B cell (primary cell): ENCODE measurements at regions of chr3 and their contacts with region 1.

Region 1: GRCh38 chr3:64023187-64023848 is at the start of gene PSMD6:
- DNase-seq: peak; percentile 94
- ATAC-seq: peak; percentile 98
- H3K4me3 ChIP-seq: peak within 1 kb of the TSS; percentile 85 to 92 (median 87)
- H3K4me3 Mint-ChIP-seq: peak within 1 kb of the TSS; percentile 91
- H3K27ac ChIP-seq: peak within 1 kb of the TSS; percentile 73 to 90
- H3K27ac Mint-ChIP-seq: peak within 1 kb of the TSS; percentile 86
- H3K4me1 ChIP-seq: peaks cover 15 to 18% of the 10 kb centered on the region in 2 donors
- H3K4me1 Mint-ChIP-seq: peaks cover 26% of the 10 kb centered on the region
- H3K27me3 ChIP-seq: peaks cover 0 to 6% (median 4%) of the 10 kb centered on the region in 4 experiments
- H3K27me3 Mint-ChIP-seq: peaks cover 4% of the 10 kb centered on the region
- CTCF ChIP-seq: peak; percentile 100
- total RNA-seq, gene PSMD6: 63.4 and 64.7 TPM in 2 replicates

Region 2: DNA sequence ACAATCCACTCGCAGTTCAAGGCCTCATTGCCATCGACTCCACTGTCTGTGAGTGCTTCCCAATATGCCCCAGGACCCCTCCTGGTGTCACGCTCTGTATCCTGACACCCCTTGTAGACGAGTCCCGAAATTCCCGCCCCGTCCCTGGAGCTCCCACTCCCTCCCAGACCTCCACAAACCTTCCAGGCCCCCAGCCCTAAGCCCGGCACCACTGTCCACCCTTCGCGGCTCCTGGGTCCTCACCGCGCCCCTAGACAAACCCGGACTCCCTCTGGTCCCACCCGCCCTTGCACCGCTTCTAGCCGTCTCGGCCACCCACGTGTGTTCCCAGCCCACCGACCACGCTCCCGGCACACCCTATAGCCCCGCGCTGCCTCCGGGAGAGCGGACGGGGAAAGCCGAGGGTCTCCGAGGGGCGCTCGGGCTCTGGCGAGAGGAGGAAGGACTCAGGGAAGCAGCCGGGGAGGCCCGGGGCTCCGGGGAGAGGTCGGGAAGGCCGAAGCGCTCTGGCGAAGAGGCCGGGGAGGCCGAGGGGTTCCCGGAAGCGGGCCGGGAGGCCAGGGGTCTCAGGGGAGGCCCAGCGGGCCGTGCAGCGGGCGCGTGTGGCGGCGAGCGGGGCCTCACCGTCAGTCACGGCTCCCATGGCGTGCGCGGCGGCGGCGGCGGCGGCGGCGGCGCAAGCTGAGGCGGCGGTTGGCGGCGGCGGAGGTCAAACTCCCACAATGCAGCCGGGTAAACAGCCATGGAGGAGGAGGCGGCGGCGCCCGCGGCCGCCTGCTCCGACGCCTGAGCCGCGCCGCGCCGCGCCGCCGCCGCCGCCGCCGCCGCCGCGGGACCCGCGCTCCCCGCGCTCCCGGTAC is 159.9 kb before region 1 on chr3 and contains the starts of genes ATXN7 and THOC7:
- CTCF ChIA-PET with region 1: no interaction called
- POLR2A ChIA-PET with region 1: no interaction called
- intact Hi-C with region 1: loop called (anchors 2 kb)
- DNase-seq: peak; percentile 87
- ATAC-seq: peak; percentile 77
- H3K4me3 ChIP-seq: peak within 1 kb of the TSS; percentile 58 to 96 (median 84)
- H3K4me3 Mint-ChIP-seq: peak within 1 kb of the TSS; percentile 97
- H3K27ac ChIP-seq: peak within 1 kb of the TSS; percentile 64 to 88
- H3K27ac Mint-ChIP-seq: peak within 1 kb of the TSS; percentile 97
- H3K4me1 ChIP-seq: peaks cover 16 to 19% of the 10 kb centered on the region in 2 donors
- H3K4me1 Mint-ChIP-seq: peaks cover 55% of the 10 kb centered on the region
- H3K27me3 ChIP-seq: no peaks in the 10 kb centered on the region
- H3K27me3 Mint-ChIP-seq: no peaks in the 10 kb centered on the region
- CTCF ChIP-seq: no peak
- total RNA-seq, gene ATXN7: 74.3 and 74.7 TPM in 2 replicates
- total RNA-seq, gene THOC7: 30.5 and 31.5 TPM in 2 replicates

Region 3: DNA sequence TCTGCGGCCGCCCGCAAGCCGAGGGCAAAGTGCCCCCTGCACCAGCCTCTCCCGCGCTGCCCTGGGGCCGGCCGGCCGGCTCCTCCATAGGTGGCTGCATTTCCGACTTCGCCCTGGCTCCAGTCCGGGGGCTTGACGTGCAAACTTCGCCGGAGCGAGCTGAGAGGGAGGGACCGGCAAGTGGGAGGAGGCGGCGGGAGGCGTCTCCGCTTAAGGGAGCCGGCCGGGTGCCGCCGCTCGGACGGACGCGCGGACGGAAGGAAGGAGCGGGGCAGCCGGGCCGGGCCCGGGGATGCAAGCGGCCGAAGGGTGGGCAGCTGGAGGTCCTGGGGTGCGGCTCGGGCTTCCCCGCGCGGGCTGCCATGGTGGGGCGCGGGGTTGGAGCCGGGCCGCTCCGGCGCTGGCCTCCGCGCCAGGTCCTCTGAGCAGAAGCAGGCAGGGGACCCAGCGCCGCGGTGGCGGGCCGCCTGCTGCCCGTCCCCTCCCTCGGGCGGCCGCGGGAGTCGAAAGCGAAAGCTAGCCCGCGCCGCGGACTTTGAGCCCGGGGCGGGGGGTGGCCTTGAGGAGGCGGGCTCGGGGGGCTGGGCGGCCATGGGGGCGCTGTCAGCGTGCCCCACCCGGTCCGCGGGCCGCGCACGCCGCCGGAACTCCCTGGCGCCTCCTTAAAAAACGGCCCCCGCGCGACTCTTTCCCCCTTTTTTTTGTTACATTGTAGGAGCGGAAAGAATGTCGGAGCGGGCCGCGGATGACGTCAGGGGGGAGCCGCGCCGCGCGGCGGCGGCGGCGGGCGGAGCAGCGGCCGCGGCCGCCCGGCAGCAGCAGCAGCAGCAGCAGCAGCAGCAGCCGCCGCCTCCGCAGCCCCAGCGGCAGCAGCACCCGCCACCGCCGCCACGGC is 111.2 kb before region 1 on chr3 and contains the start of gene SCAANT1:
- CTCF ChIA-PET with region 1: interaction called, 6 read pairs
- POLR2A ChIA-PET with region 1: no interaction called
- intact Hi-C with region 1: loop called (anchors 1 kb)
- DNase-seq: peak; percentile 89
- ATAC-seq: peak; percentile 70
- H3K4me3 ChIP-seq: peak within 1 kb of the TSS; percentile 54 to 73 (median 63)
- H3K4me3 Mint-ChIP-seq: peak within 1 kb of the TSS; percentile 95
- H3K27ac ChIP-seq: peak within 1 kb of the TSS; percentile 70 to 87
- H3K27ac Mint-ChIP-seq: peak within 1 kb of the TSS; percentile 97
- H3K4me1 ChIP-seq: peaks cover 17 to 25% of the 10 kb centered on the region in 2 donors
- H3K4me1 Mint-ChIP-seq: peaks cover 28% of the 10 kb centered on the region
- H3K27me3 ChIP-seq: no peaks in the 10 kb centered on the region
- H3K27me3 Mint-ChIP-seq: no peaks in the 10 kb centered on the region
- CTCF ChIP-seq: no peak
- total RNA-seq, gene SCAANT1: 1.7 TPM in 1 of 2 replicates, not detected in the other

Region 4: GRCh38 chr3:63927422-63928280 is 95.7 kb before region 1 on chr3:
- CTCF ChIA-PET with region 1: no interaction called
- POLR2A ChIA-PET with region 1: no interaction called
- intact Hi-C with region 1: loop called (anchors 5 kb)
- DNase-seq: peak; percentile 68
- ATAC-seq: peak; percentile 91
- H3K4me3 ChIP-seq: peak overlapping the region in 1 of 5 experiments; percentile 11
- H3K4me3 Mint-ChIP-seq: peak overlapping the region; percentile 33
- H3K27ac ChIP-seq: peak overlapping the region; percentile 33 to 76
- H3K27ac Mint-ChIP-seq: peak overlapping the region; percentile 84
- H3K4me1 ChIP-seq: peaks cover 58 to 63% of the 10 kb centered on the region in 2 donors
- H3K4me1 Mint-ChIP-seq: peaks cover 80% of the 10 kb centered on the region
- H3K27me3 ChIP-seq: no peaks in the 10 kb centered on the region
- H3K27me3 Mint-ChIP-seq: no peaks in the 10 kb centered on the region
- CTCF ChIP-seq: no peak

Region 5: GRCh38 chr3:64355401-64355807 is 332.1 kb after region 1 on chr3:
- CTCF ChIA-PET with region 1: no interaction called
- POLR2A ChIA-PET with region 1: no interaction called
- intact Hi-C with region 1: no loop called
- DNase-seq: no peak
- ATAC-seq: no peak
- H3K4me3 ChIP-seq: no peak overlapping the region
- H3K4me3 Mint-ChIP-seq: no peak overlapping the region
- H3K27ac ChIP-seq: no peak overlapping the region
- H3K27ac Mint-ChIP-seq: no peak overlapping the region
- H3K4me1 ChIP-seq: no peaks in the 10 kb centered on the region
- H3K4me1 Mint-ChIP-seq: peaks cover 4% of the 10 kb centered on the region
- H3K27me3 ChIP-seq: no peaks in the 10 kb centered on the region
- H3K27me3 Mint-ChIP-seq: no peaks in the 10 kb centered on the region
- CTCF ChIP-seq: no peak

Region 6: DNA sequence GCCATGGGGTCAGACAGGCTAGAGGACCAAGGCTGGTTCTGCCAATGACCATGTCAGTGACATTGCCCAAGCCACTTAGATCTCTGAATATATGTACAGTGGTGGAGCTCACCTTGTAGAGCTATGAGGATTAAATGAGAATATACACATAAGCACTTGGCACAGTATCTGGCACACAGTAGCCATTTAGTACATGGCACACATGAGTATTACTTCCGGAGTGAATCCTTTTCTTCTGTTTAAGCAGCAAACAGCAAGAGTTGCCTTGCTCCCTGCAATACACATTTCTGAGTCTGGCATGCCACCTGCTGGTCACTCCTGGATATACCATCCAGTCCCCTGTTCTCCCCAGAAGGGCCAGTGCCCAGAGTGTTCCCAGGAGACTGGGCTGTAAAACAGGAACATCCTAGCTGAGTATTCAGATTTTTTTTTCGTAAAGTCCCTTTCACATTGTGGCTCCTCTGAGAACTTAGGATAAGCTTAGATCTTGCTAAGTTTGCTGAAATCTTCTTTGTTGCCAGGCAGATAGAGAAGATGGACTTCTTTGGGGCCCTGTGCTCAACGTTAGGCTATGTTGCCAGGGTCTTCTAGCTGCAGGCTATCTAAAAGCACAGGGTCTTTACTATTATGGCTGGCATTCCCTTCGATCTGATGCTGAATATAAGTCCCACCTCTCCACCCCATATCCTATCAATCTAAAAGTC is 461.1 kb after region 1 on chr3:
- CTCF ChIA-PET with region 1: interaction called, 65 read pairs
- POLR2A ChIA-PET with region 1: no interaction called
- intact Hi-C with region 1: no loop called
- DNase-seq: peak; percentile 72
- ATAC-seq: peak; percentile 95
- H3K4me3 ChIP-seq: no peak overlapping the region
- H3K4me3 Mint-ChIP-seq: no peak overlapping the region
- H3K27ac ChIP-seq: no peak overlapping the region
- H3K27ac Mint-ChIP-seq: no peak overlapping the region
- H3K4me1 ChIP-seq: peaks cover 0 to 4% of the 10 kb centered on the region in 2 donors
- H3K4me1 Mint-ChIP-seq: peaks cover 4% of the 10 kb centered on the region
- H3K27me3 ChIP-seq: peaks cover 0 to 13% (median 1%) of the 10 kb centered on the region in 4 experiments
- H3K27me3 Mint-ChIP-seq: peaks cover 21% of the 10 kb centered on the region
- CTCF ChIP-seq: peak; percentile 84